Left lung (tissue), 14 donors: ENCODE measurements at regions of chr7 and their contacts with region 1.

Region 1: DNA sequence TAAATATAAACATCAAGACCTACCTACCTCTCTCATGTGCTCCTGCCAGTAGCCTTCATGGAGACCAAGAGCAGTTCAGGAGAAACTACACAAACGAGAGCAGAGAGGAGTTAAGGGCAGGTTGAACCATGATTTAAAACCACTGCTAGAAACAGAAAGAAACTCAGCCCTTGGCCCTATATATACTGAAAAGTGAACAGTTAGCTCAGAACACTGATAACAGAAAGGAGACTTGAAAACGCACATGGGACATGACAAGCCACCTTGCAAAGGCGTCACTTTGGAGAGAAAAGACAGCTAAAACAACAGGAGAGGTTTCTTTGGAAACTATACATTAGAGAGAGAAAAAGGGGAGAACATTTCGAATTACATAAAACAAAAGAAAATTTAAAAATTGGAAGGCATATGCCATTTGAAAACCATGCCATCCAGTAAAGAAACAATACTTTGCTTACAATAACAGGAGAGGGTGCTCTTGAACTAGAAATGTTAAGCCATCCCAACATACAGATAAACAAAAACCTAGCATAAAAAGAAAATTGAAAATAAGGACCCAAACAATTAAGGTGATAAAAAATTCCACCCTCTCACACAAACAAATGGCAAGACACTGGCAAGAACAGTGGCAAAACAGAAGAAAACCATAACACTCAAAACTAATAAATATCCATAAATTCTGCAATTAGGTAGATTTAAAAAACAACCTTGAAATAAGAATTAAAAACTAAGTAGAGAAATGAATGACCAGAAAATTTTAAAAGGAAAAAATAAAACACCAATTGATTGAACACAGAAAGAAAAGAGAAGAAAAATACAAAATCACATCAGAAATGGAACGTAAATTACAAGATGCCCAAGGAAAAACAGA is 232.7 kb downstream of the IMMP2L start:
- DNase-seq: no peak
- ATAC-seq: no peak
- H3K4me3 ChIP-seq: no peak overlapping the region
- H3K27ac ChIP-seq: no peak overlapping the region
- H3K4me1 ChIP-seq: no peaks in the 10 kb centered on the region
- H3K27me3 ChIP-seq: no peaks in the 10 kb centered on the region
- CTCF ChIP-seq: no peak

Region 2: DNA sequence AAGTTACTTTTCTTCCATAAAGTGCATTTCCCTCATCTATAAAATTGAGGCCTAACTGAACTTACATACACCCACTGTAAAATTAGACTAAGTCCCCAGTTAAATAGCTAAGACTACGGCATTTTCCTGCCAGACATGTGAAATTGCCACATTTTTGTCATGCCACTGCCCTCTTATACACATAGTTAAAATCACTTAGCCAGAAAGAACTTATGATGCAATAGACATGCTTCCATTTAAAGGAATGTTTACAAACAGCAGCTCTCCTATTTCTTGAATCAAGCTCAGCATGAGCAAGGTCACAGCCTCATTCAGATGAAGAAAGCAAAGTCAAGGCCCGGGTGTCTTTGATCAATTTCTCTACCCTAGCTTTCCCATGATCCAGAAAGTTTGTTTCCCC is 63.0 kb before region 1 on chr7:
- intact Hi-C with region 1: no loop called
- DNase-seq: peak in 2 of 4 donors; percentile 54 to 61
- ATAC-seq: peak; percentile 83
- H3K4me3 ChIP-seq: no peak overlapping the region
- H3K27ac ChIP-seq: peak overlapping the region in 1 of 2 donors; percentile 56
- H3K4me1 ChIP-seq: peaks cover 0 to 2% of the 10 kb centered on the region in 2 donors
- H3K27me3 ChIP-seq: no peaks in the 10 kb centered on the region
- CTCF ChIP-seq: no peak

Region 3: GRCh38 chr7:111486472-111487142 is 157.0 kb after region 1 on chr7:
- intact Hi-C with region 1: loop called in 1 of 2 experiments (anchors 10 kb)
- DNase-seq: peak in 2 of 4 donors; percentile 46 to 66
- ATAC-seq: peak; percentile 91
- H3K4me3 ChIP-seq: no peak overlapping the region
- H3K27ac ChIP-seq: no peak overlapping the region
- H3K4me1 ChIP-seq: no peaks in the 10 kb centered on the region
- H3K27me3 ChIP-seq: no peaks in the 10 kb centered on the region
- CTCF ChIP-seq: peak; percentile 61 to 69

Region 4: GRCh38 chr7:112001089-112001826 is 671.7 kb after region 1 on chr7:
- intact Hi-C with region 1: no loop called
- DNase-seq: no peak
- ATAC-seq: peak; percentile 49
- H3K4me3 ChIP-seq: no peak overlapping the region
- H3K27ac ChIP-seq: peak overlapping the region in 1 of 2 donors; percentile 45
- H3K4me1 ChIP-seq: peaks cover 0 to 4% of the 10 kb centered on the region in 2 donors
- H3K27me3 ChIP-seq: no peaks in the 10 kb centered on the region
- CTCF ChIP-seq: no peak